Activated CD4-positive, alpha-beta T cell treated with anti-CD3 and anti-CD28 coated beads, Interleukin-2, amount 10 ng/mL, durations not matched to agents 24 days and 14 days (primary cell): ENCODE measurements at regions of chr1 and their contacts with region 1.

Region 1: GRCh38 chr1:101451888-101452287 is 215.1 kb downstream of the S1PR1 start:
- DNase-seq: peak; percentile 55
- H3K4me3 Mint-ChIP-seq: no peak overlapping the region
- H3K27ac Mint-ChIP-seq: peak overlapping the region; percentile 23
- H3K4me1 Mint-ChIP-seq: peaks cover 29% of the 10 kb centered on the region
- H3K27me3 Mint-ChIP-seq: peaks cover 19% of the 10 kb centered on the region

Region 2: GRCh38 chr1:100921109-100921706 is 530.7 kb before region 1 on chr1:
- intact Hi-C with region 1: loop called (anchors 10 kb)
- DNase-seq: peak; percentile 70
- H3K4me3 Mint-ChIP-seq: no peak overlapping the region
- H3K27ac Mint-ChIP-seq: no peak overlapping the region
- H3K4me1 Mint-ChIP-seq: peaks cover 25% of the 10 kb centered on the region
- H3K27me3 Mint-ChIP-seq: no peaks in the 10 kb centered on the region

Region 3: GRCh38 chr1:101496109-101496508 is 44.2 kb after region 1 on chr1:
- intact Hi-C with region 1: no loop called
- DNase-seq: no peak
- H3K4me3 Mint-ChIP-seq: no peak overlapping the region
- H3K27ac Mint-ChIP-seq: no peak overlapping the region
- H3K4me1 Mint-ChIP-seq: no peaks in the 10 kb centered on the region
- H3K27me3 Mint-ChIP-seq: peaks cover 17% of the 10 kb centered on the region

Region 4: GRCh38 chr1:101506541-101507164 is 54.8 kb after region 1 on chr1:
- intact Hi-C with region 1: no loop called
- DNase-seq: peak; percentile 81
- H3K4me3 Mint-ChIP-seq: no peak overlapping the region
- H3K27ac Mint-ChIP-seq: no peak overlapping the region
- H3K4me1 Mint-ChIP-seq: no peaks in the 10 kb centered on the region
- H3K27me3 Mint-ChIP-seq: peaks cover 22% of the 10 kb centered on the region